ENCODE measurements at regions of chr14 and their contacts with region 1.

Region 1: DNA sequence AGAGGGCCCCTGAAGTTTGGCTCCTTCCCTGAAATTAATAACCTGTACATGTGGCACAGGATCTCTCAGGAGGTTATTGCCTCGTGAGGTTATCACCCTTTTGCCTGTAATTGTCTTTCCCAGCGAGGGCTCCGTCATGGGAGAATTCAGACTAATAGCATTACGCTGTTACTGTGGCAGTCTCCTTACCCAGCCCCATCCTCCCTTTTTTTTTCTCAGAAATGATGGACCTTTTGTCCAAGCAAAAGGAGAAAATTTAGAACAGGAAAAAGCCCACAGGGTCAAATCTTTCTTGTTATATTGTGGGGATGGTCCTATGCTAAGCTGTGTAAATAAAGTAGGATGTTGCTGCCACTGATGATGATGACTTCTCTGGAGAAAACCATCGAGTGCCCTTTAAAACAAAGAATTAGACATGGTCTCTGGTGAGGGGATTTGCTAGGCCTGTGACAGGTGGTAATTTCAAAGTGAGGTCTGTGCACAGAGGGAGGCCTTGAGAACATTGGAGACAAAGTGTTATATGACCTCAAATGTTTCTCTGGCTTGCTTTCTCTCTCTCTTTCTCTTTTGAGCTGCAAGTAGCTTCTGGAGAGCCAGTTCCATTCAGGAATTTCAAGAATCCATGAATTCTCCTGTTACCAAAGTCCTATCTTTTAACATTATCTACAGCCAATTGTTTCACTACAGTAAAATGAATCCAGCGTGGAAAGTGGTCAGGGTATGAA is 357.2 kb downstream of the BMP4 start:
- DNase-seq: no peak
- H3K4me3 ChIP-seq: no peak overlapping the region
- H3K27ac ChIP-seq: no peak overlapping the region
- H3K4me1 ChIP-seq: peaks cover 9% of the 10 kb centered on the region
- CTCF ChIP-seq: no peak

Region 2: DNA sequence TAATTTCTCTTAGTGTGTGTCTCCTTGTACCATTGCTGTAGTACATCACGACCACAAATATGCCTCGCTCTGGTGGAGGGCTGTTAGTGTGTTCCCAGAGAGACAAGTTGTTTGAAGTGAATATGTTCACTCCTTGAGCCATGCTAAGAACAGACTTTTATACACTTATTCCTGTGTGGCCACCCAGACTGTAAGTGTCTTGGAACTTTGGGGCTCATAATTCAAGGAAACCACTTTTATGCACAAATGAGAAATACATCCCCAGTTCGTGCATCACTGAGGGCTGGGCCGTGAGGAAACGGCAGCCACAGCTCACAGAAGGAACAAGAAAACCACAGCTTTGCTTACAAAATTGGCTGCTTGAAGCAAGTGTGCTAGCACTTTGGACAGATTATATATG is 84.1 kb before region 1 on chr14:
- CTCF ChIA-PET with region 1: no interaction called
- POLR2A ChIA-PET with region 1: interaction called, 10 read pairs
- intact Hi-C with region 1: no loop called
- DNase-seq: no peak
- H3K4me3 ChIP-seq: no peak overlapping the region
- H3K27ac ChIP-seq: no peak overlapping the region
- H3K4me1 ChIP-seq: no peaks in the 10 kb centered on the region
- CTCF ChIP-seq: no peak

Region 3: DNA sequence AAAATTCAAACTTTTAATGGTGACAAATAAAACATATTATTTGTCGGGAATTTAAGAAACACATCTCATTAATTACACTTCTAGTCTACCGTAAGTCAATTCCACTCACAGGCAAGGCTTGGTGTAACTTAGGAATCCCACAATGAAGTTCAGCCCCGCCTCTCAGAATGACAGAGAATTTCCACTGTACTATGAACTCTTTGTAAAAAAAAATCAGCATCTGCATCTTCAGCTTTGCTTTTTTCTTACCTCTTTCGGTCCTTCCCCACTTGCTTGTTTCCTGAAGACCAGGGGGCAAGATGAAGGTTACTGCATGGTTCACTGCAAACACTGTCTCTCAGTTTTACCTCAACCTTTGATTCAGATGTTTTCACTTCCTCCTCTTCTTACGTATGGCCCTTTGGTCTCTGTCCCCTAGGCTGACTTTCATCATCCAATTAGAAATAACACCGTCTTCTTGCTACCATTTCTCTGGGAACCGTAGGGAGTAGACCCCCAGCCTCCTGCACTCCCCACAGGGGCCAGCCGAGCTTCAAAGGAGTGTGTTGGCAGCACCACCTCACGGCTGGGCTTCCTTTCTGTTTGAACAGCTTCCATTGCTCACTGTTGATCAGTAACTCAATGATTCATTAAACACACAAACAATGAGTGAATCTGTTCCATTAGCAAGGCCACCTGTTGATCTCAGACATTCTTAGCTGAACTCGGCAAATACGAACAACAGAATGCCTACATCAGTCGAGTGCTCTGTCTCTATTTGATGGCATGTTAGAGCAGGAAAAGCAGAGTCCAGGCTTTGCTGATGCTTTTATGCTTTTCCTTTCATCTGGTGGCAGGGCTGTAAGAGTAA is 14.2 kb after region 1 on chr14:
- CTCF ChIA-PET with region 1: interaction called, 3 read pairs
- POLR2A ChIA-PET with region 1: interaction called, 10 read pairs
- intact Hi-C with region 1: no loop called
- DNase-seq: peak; percentile 96
- H3K4me3 ChIP-seq: peak overlapping the region; percentile 69
- H3K27ac ChIP-seq: peak overlapping the region; percentile 95
- H3K4me1 ChIP-seq: peaks cover 64% of the 10 kb centered on the region
- CTCF ChIP-seq: peak; percentile 44; the same call in 1 of the 2 replicates

Region 4: GRCh38 chr14:53796734-53797133 is 197.4 kb after region 1 on chr14:
- CTCF ChIA-PET with region 1: no interaction called
- POLR2A ChIA-PET with region 1: no interaction called
- intact Hi-C with region 1: no loop called
- DNase-seq: no peak
- H3K4me3 ChIP-seq: no peak overlapping the region
- H3K27ac ChIP-seq: no peak overlapping the region
- H3K4me1 ChIP-seq: no peaks in the 10 kb centered on the region
- CTCF ChIP-seq: no peak

Measured in OCI-LY7 (cell line).